Right ventricle myocardium inferior (tissue), 1 donor: ENCODE measurements at regions of chr15 and their contacts with region 1.

Region 1: DNA sequence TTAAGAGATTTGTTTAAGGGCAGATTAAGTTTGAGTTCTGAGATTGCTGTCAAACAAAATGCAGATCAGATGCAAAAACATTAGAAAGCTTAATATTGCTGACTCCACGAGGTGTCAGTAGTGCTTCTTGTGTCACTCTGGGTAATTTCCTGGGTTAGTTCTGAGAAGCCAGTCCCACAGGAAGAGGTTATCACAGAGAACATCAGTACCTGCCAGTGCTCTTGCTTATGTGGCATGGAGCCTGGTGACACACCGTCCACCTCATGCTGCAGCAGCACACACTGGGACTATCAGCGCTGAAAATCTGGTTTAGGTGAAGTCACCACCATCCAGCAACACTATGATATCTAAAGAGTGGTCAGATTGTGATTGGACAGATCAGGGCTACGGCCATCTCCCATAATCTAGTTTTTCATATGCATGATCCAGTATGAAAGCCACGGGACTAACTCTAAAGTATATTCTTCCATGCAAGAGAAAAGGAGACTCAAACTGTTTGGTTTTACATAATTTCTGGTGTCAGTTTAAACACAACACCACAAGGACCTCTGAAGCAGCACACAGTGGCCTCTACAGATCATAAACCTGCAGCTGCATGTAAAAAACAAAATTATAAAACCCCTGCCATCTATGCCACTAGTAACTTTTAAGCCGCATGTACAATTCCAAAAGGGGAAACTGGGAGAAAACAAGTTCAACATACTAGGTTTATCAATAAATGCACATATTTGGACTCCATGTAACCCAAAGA is 36.1 kb upstream of the MYO5C start:
- DNase-seq: no peak
- ATAC-seq: peak; percentile 59

Region 2: GRCh38 chr15:52251144-52251860 is 80.4 kb before region 1 on chr15:
- intact Hi-C with region 1: loop called (anchors 2 kb)
- DNase-seq: no peak
- ATAC-seq: no peak

Region 3: GRCh38 chr15:52370010-52370409 is 38.3 kb after region 1 on chr15:
- intact Hi-C with region 1: no loop called
- DNase-seq: no peak
- ATAC-seq: no peak

Region 4: DNA sequence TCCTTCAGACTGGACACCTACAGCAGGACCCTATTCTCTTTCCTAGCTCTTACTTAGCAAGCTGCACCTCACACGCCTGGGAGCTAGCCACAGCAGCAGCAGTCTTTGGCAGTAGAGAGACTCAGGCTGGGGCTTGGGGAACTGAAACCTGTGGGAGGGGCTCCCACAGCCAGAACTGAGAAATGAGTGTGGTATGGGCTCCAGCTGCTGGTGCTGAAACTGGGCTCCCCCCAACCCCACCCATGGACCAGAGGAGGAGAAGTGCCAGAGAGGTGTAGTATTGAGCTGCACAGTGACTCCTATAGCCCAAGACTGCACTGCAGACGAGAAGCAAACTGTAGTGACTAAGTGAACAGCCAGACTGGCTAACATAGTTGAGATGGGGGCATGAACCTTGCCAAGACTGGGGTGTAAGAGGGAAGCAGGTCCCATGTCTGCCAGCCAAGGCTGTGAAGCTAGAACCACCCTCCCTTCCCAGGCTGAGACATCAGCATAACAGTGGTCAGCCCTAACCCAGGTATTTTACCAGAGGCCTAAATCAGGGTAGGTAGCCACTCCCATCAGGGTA is 134.6 kb after region 1 on chr15:
- intact Hi-C with region 1: loop called (anchors 5 kb)
- DNase-seq: peak; percentile 72
- ATAC-seq: peak; percentile 89

Region 5: GRCh38 chr15:52730173-52730572 is 398.5 kb after region 1 on chr15:
- intact Hi-C with region 1: loop called (anchors 5 kb)
- DNase-seq: no peak
- ATAC-seq: no peak